Lower leg skin (tissue), 4 donors: ENCODE measurements at regions of chr12 and their contacts with region 1.

Region 1: GRCh38 chr12:40921563-40922163 is 229.4 kb downstream of the CNTN1 start:
- DNase-seq: no peak
- H3K4me3 ChIP-seq: no peak overlapping the region
- CTCF ChIP-seq: no peak
- POLR2A ChIP-seq: no peak

Region 2: DNA sequence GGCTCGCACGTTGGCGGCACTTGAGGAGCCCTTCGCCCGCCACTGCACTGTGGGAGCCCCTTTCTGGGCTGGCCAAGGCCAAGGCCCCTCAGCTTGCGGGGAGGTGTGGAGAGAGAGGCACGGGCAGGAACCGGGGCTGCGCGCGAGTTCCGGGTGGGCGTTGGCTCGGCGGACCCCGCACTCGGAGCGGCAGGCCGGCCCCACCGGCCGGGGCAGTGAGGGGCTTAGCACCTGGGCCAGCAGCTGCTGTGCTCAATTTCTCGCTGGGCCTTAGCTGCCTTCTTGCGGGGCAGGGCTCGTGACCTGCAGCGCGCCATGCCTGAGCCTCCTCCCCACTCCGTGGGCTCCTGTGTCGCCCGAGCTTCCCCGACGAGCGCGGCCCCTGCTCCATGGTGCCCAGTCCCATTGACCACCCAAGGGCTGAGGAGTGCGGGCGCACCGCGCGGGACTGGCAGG is 301.1 kb before region 1 on chr12:
- intact Hi-C with region 1: loop called (anchors 2 kb)
- DNase-seq: no peak
- H3K4me3 ChIP-seq: no peak overlapping the region
- CTCF ChIP-seq: no peak
- POLR2A ChIP-seq: no peak

Region 3: DNA sequence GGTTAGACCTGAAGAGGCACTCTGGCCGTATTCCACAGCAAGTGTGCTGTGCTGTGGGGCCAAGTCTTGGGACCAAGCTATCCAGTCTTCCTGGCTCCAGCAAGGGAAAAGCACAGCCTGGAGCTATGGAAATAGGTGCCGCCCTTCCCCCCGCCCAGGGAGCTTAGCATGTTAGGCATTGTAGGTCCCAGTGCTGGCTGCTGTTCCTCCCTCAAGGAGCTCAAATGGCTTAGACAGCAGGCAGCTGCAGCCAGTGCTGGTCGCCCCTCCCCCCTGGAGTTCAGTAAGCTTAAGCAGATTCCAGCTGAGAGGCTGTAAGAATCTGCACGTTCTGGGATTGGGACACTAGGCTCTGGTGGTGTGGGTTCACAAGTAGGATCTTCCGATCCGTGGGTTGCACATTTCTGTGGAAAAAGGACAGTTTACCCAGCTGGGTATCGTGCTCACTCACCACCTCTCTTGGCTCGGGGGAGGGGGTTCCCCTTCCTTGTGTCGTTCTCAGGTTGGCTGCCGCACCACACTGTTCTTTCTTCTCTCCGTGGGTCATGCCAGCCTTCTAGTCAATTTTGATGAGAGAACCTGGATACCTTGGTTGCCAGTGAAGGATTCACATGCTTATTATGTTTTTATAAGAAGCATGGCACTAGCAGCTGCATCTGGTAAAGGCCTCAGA is 102.1 kb before region 1 on chr12:
- intact Hi-C with region 1: loop called (anchors 5 kb)
- DNase-seq: peak in 1 of 2 donors; percentile 83
- H3K4me3 ChIP-seq: no peak overlapping the region
- CTCF ChIP-seq: no peak
- POLR2A ChIP-seq: no peak